Naive thymus-derived CD4-positive, alpha-beta T cell (primary cell): ENCODE measurements at regions of chr14 and their contacts with region 1.

Region 1: DNA sequence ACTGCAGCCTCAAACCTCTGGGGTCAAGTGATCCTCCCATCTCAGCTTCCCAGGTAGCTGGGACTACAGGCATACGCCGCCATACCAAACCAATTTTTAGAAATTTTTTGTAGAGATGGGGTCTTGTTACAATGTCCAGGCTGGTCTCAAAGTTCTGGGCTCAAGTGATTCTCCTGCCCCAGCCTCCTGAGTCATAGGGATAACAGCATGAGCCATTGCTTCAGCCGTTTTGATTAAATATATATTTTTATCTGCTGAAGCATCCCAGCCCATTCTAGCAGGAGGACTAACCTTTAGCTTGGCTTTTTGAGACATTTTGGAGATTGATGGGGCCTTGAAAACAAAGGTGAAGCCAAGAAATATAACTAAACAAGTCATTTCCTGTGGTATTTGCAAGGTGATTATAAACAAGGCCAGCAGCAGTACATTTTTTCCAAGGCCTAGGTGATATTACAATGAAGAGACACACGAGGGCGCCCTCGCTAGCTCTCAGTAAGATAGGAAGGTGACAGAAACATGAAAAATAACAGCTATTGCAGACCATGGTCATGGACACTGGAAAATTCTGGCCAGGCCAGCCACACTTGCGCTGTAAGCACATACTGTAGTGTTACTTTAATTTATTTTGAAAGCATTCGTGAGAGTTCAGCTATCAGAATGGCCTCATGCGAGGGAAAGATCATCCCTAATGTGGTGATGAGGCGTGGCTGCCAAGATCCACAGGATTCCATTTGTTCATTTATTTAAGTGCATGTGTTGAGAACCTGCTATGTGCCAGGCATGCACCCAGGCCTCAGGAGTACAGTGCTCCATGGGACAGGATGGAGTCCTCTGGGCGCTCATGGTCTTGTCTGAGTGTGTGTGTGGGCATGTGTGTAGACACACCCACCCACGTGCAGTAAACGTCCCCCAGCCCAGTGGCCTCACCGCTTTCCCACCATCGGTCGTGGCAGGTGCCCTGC is 63.5 kb downstream of the DGLUCY start:
- DNase-seq: peak; percentile 30 to 80 (median 68)
- ATAC-seq: peak; percentile 91
- H3K4me3 ChIP-seq: no peak overlapping the region
- H3K4me3 Mint-ChIP-seq: peak overlapping the region in 1 of 10 donors; percentile 8
- H3K27ac ChIP-seq: peak overlapping the region; percentile 44
- H3K27ac Mint-ChIP-seq: peak overlapping the region in 8 of 9 donors; percentile 12 to 85 (median 68)
- H3K4me1 ChIP-seq: peaks cover 0 to 8% of the 10 kb centered on the region in 2 donors
- H3K4me1 Mint-ChIP-seq: peaks cover 6 to 29% (median 13%) of the 10 kb centered on the region in 7 donors
- H3K27me3 ChIP-seq: no peaks in the 10 kb centered on the region
- H3K27me3 Mint-ChIP-seq: no peaks in the 10 kb centered on the region

Region 2: DNA sequence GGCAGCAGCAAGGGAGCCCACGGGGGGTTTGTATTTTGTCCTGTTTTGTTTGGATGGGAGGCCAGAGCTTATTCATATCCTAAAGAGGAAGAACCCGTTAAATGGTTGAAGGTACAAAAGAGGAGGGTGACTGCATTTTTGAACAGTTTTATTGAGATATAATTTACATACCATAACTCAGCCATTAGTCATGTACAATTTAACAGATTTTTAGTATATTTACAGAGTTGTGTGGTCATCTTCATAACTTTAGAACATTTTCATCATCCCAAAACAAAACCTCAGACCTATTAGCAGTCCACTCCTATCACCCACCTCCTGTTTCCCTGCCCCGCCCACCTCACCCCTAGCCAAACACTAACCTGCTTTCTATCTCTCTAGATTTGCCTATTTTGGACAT is 858.2 kb before region 1 on chr14:
- CTCF ChIA-PET with region 1: no interaction called
- POLR2A ChIA-PET with region 1: no interaction called
- intact Hi-C with region 1: no loop called
- DNase-seq: no peak
- ATAC-seq: no peak
- H3K4me3 ChIP-seq: no peak overlapping the region
- H3K4me3 Mint-ChIP-seq: no peak overlapping the region
- H3K27ac ChIP-seq: no peak overlapping the region
- H3K27ac Mint-ChIP-seq: peak overlapping the region in 2 of 9 donors; percentile 13 to 62
- H3K4me1 ChIP-seq: peaks cover 0 to 4% of the 10 kb centered on the region in 2 donors
- H3K4me1 Mint-ChIP-seq: peaks cover 8 to 38% (median 32%) of the 10 kb centered on the region in 7 donors
- H3K27me3 ChIP-seq: no peaks in the 10 kb centered on the region
- H3K27me3 Mint-ChIP-seq: no peaks in the 10 kb centered on the region

Region 3: DNA sequence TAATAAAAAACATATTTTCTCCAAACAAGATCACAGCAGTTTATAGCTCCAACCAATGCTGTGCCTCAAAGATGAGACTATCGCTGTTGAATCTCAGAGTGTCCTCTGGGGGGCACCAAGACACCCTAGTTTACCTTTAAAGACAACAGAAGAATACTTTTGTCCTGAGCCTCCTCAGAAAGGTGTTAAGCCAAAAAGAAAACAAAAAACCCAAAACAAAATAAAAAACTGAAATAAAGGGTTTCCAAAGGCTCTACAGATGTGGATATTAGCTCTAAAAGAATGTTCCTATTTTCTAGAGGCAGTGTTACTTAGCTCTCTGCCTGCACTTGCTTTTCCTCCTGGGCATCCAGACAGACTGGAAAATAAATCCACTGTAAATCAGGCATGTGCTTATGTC is 274.3 kb before region 1 on chr14:
- CTCF ChIA-PET with region 1: interaction called, 155 read pairs
- POLR2A ChIA-PET with region 1: interaction called, 9 read pairs
- intact Hi-C with region 1: loop called (anchors 1 kb)
- DNase-seq: peak; percentile 11 to 71 (median 57)
- ATAC-seq: peak; percentile 89
- H3K4me3 ChIP-seq: no peak overlapping the region
- H3K4me3 Mint-ChIP-seq: no peak overlapping the region
- H3K27ac ChIP-seq: no peak overlapping the region
- H3K27ac Mint-ChIP-seq: peak overlapping the region in 2 of 9 donors; percentile 36 to 48
- H3K4me1 ChIP-seq: no peaks in the 10 kb centered on the region
- H3K4me1 Mint-ChIP-seq: peaks cover 0 to 30% (median 0%) of the 10 kb centered on the region in 7 donors
- H3K27me3 ChIP-seq: no peaks in the 10 kb centered on the region
- H3K27me3 Mint-ChIP-seq: no peaks in the 10 kb centered on the region

Region 4: DNA sequence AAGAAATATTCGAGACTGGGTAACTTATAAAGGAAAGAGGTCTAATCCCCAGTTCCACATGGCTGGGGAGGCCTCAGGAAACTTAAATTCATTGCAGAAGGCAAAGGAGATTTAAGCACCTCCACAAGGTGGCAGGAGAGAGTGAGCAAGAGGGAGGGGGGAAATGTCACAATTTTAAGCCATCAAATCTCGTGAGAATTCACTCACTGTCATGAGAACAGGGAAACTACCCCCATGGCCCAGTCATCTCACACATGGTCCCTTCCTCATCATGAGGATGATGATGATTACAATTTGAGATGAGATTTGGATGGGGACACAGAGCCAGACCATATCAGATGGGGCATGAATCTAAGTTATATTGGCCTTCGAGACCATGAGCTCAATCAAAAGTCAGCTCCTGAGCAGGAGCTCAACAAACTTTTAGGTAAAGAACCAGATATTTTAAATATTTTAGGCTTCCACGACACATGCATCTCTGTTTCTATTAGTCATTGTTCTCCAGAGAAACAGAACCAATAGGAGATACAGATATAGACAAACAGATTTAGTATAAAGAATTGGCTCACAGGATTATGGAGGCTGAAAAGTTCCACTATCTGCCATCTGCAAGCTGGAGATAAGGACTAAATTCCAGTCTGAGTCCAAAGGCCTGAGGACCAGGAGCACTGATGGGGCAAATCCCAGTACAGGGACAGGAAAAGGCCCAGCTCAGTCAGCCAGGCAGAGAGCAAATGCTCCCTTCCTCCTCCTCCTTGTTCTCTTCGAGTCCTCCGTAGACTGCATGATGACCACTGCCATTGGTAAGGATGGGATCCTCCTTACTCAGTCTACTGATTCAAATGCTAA is 38.6 kb before region 1 on chr14:
- CTCF ChIA-PET with region 1: no interaction called
- POLR2A ChIA-PET with region 1: no interaction called
- intact Hi-C with region 1: loop called in 1 of 2 experiments (anchors 1 kb)
- DNase-seq: peak in 8 of 9 donors; percentile 11 to 56 (median 45)
- ATAC-seq: peak; percentile 75
- H3K4me3 ChIP-seq: no peak overlapping the region
- H3K4me3 Mint-ChIP-seq: no peak overlapping the region
- H3K27ac ChIP-seq: no peak overlapping the region
- H3K27ac Mint-ChIP-seq: peak overlapping the region in 4 of 9 donors; percentile 31 to 67 (median 52)
- H3K4me1 ChIP-seq: peaks cover 5 to 12% of the 10 kb centered on the region in 2 donors
- H3K4me1 Mint-ChIP-seq: peaks cover 16 to 59% (median 33%) of the 10 kb centered on the region in 7 donors
- H3K27me3 ChIP-seq: no peaks in the 10 kb centered on the region
- H3K27me3 Mint-ChIP-seq: no peaks in the 10 kb centered on the region

Region 5: DNA sequence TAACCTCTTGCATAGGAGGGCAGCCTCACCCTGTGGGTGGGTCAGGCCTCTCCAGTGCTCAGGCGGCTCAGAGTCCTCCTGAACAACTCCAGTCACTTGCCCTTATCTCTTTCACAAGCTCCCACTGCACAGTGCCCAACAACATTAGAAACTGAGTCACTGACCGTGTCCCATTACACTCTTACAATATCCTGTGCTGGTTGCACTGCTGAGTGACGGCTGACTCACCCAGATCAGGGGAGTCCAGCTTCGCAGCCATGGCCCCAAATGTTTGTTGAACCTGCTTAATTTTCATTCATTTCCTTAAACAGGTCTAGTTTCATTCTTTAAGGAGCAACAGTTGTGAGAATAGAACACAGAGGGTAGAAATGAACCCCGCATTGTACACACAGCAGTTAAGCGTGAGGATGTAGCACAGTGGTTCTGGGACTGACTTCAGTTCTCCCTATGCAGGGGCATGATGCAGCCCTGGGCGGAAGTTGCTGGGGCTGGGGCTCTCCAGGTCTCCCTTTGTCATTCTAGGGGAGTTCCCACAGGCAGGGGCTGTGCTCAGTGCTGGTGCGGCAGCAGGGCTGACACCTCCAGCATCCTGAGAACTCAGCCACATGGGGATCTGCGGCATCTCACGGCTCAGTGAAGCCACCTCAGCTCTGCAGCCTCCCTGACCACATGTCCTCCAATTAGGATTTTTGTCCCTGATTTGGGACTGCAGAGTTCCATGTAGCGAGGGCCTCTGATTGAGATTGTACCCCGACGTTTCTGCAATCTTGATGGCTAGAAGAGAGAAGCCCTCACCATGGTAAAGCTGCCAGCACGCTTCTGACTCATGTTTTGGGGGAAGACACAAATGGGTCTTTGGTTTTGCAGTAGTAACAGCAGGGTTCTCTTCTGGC is 51.0 kb after region 1 on chr14:
- CTCF ChIA-PET with region 1: interaction called, 7 read pairs
- POLR2A ChIA-PET with region 1: interaction called, 3 read pairs
- intact Hi-C with region 1: loop called (anchors 1 to 2 kb)
- DNase-seq: peak; percentile 42 to 86 (median 60)
- ATAC-seq: peak; percentile 89
- H3K4me3 ChIP-seq: peak overlapping the region; percentile 34
- H3K4me3 Mint-ChIP-seq: peak overlapping the region; percentile 48 to 87 (median 73)
- H3K27ac ChIP-seq: peak overlapping the region; percentile 57
- H3K27ac Mint-ChIP-seq: peak overlapping the region; percentile 9 to 98 (median 88)
- H3K4me1 ChIP-seq: peaks cover 89 to 92% of the 10 kb centered on the region in 2 donors
- H3K4me1 Mint-ChIP-seq: peaks cover 69 to 99% (median 93%) of the 10 kb centered on the region in 7 donors
- H3K27me3 ChIP-seq: no peaks in the 10 kb centered on the region
- H3K27me3 Mint-ChIP-seq: no peaks in the 10 kb centered on the region

Region 6: GRCh38 chr14:91293281-91293680 is 115.9 kb after region 1 on chr14:
- CTCF ChIA-PET with region 1: interaction called, 204 read pairs
- POLR2A ChIA-PET with region 1: interaction called, 21 read pairs
- intact Hi-C with region 1: no loop called
- DNase-seq: no peak
- ATAC-seq: no peak
- H3K4me3 ChIP-seq: no peak overlapping the region
- H3K4me3 Mint-ChIP-seq: no peak overlapping the region
- H3K27ac ChIP-seq: peak overlapping the region; percentile 57
- H3K27ac Mint-ChIP-seq: peak overlapping the region in 8 of 9 donors; percentile 39 to 86 (median 64)
- H3K4me1 ChIP-seq: no peaks in the 10 kb centered on the region
- H3K4me1 Mint-ChIP-seq: peaks cover 0 to 12% (median 0%) of the 10 kb centered on the region in 7 donors
- H3K27me3 ChIP-seq: no peaks in the 10 kb centered on the region
- H3K27me3 Mint-ChIP-seq: no peaks in the 10 kb centered on the region

Region 7: DNA sequence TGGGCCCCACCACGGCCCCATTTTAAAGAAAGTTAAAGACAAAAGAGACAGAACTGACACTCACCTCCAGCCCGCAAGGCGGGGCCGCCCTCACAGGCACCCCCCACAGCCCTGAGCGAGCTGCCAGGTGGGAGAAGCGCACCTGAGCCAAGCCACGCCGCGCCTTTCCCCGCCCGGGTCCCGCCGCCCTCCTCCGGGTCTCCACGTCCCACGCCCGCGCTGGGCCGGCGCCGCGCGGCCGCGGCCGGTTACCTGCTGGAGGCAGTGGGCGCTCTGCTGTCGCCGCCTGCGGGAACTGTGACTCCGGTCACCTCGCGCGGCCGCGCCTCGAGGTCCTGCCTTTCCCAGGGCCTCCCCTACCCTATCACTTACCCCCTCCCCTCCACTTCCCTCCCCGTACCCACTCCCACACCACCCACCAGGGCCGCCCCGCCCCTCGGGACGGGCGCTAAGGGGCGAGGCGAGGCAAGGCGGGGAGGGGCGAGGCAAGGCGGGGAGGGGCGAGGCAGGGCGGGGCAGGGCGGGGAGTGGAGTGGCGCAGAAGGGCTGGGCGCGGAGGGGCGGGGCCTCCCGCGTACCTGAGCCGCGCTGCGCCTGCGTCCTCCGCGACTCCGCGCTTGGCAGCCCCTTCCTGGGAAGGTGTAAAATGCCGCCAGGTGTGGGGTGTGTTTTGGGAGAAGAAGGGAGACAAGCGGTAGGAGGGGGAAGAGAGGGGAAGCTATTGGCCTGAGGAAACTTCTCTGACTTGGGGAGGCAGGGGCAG is 658.9 kb after region 1 on chr14:
- CTCF ChIA-PET with region 1: no interaction called
- POLR2A ChIA-PET with region 1: no interaction called
- intact Hi-C with region 1: no loop called
- DNase-seq: peak; percentile 71 to 92 (median 86)
- ATAC-seq: peak; percentile 94
- H3K4me3 ChIP-seq: peak overlapping the region; percentile 61
- H3K4me3 Mint-ChIP-seq: peak overlapping the region; percentile 71 to 96 (median 90)
- H3K27ac ChIP-seq: peak overlapping the region; percentile 79
- H3K27ac Mint-ChIP-seq: peak overlapping the region in 8 of 9 donors; percentile 86 to 97 (median 91)
- H3K4me1 ChIP-seq: peaks cover 36 to 41% of the 10 kb centered on the region in 2 donors
- H3K4me1 Mint-ChIP-seq: peaks cover 40 to 93% (median 87%) of the 10 kb centered on the region in 7 donors
- H3K27me3 ChIP-seq: no peaks in the 10 kb centered on the region
- H3K27me3 Mint-ChIP-seq: peaks cover 0 to 6% (median 0%) of the 10 kb centered on the region in 5 donors